ENCODE measurements at regions of chr5 and their contacts with region 1.

Region 1: GRCh38 chr5:149561848-149562247 is 10.6 kb upstream of the CSNK1A1 start:
- DNase-seq: peak; percentile 8
- ATAC-seq: peak; percentile 91
- H3K4me3 Mint-ChIP-seq: no peak overlapping the region
- H3K27ac Mint-ChIP-seq: peak overlapping the region; percentile 74
- H3K4me1 Mint-ChIP-seq: peaks cover 30% of the 10 kb centered on the region
- H3K27me3 Mint-ChIP-seq: no peaks in the 10 kb centered on the region

Region 2: DNA sequence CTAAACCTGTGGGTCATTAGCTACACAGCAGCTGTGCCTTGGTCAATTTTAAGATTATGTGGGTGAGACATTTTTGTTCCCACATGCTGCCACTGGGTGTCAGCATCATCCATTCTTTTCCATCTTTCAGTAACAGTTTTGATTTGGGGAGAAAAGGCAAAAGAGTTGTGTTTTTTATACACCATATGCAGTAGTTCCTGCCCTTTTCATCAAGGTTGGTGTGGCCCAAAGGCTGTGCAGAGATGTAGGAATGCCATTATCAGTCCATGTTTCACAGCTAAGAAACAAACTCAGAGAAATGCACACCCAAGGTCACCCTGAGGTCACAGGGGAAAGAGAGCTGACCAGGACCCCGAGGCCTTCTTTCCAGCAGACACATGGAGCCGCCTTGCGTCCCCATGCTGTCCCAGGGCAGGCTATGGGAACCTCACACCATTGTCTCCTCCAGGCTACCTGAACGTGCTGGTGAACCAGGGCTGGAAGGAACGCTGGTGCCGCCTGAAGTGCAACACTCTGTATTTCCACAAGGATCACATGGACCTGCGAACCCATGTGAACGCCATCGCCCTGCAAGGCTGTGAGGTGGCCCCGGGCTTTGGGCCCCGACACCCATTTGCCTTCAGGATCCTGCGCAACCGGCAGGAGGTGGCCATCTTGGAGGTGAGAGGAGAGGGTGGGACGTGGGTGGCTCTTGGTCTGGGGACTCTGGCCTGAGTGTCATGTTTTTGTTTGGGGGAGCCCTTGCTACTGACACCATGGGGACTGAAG is 244.4 kb before region 1 on chr5:
- CTCF ChIA-PET with region 1: interaction called, 8 read pairs
- POLR2A ChIA-PET with region 1: no interaction called
- intact Hi-C with region 1: loop called in 1 of 2 experiments (anchors 10 kb)
- DNase-seq: peak; percentile 52
- ATAC-seq: peak; percentile 74
- H3K4me3 Mint-ChIP-seq: no peak overlapping the region
- H3K27ac Mint-ChIP-seq: no peak overlapping the region
- H3K4me1 Mint-ChIP-seq: no peaks in the 10 kb centered on the region
- H3K27me3 Mint-ChIP-seq: no peaks in the 10 kb centered on the region

Region 3: GRCh38 chr5:149374286-149374685 is 187.6 kb before region 1 on chr5:
- CTCF ChIA-PET with region 1: interaction called, 10 read pairs
- POLR2A ChIA-PET with region 1: no interaction called
- intact Hi-C with region 1: loop called in 1 of 2 experiments (anchors 5 kb)
- DNase-seq: no peak
- ATAC-seq: no peak
- H3K4me3 Mint-ChIP-seq: no peak overlapping the region
- H3K27ac Mint-ChIP-seq: no peak overlapping the region
- H3K4me1 Mint-ChIP-seq: no peaks in the 10 kb centered on the region
- H3K27me3 Mint-ChIP-seq: no peaks in the 10 kb centered on the region

Region 4: GRCh38 chr5:149434162-149435014 is 127.5 kb before region 1 on chr5:
- CTCF ChIA-PET with region 1: interaction called, 38 read pairs
- POLR2A ChIA-PET with region 1: interaction called, 3 read pairs
- intact Hi-C with region 1: loop called (anchors 2 kb)
- DNase-seq: peak; percentile 75
- ATAC-seq: peak; percentile 66
- H3K4me3 Mint-ChIP-seq: no peak overlapping the region
- H3K27ac Mint-ChIP-seq: no peak overlapping the region
- H3K4me1 Mint-ChIP-seq: peaks cover 14% of the 10 kb centered on the region
- H3K27me3 Mint-ChIP-seq: no peaks in the 10 kb centered on the region

Region 5: DNA sequence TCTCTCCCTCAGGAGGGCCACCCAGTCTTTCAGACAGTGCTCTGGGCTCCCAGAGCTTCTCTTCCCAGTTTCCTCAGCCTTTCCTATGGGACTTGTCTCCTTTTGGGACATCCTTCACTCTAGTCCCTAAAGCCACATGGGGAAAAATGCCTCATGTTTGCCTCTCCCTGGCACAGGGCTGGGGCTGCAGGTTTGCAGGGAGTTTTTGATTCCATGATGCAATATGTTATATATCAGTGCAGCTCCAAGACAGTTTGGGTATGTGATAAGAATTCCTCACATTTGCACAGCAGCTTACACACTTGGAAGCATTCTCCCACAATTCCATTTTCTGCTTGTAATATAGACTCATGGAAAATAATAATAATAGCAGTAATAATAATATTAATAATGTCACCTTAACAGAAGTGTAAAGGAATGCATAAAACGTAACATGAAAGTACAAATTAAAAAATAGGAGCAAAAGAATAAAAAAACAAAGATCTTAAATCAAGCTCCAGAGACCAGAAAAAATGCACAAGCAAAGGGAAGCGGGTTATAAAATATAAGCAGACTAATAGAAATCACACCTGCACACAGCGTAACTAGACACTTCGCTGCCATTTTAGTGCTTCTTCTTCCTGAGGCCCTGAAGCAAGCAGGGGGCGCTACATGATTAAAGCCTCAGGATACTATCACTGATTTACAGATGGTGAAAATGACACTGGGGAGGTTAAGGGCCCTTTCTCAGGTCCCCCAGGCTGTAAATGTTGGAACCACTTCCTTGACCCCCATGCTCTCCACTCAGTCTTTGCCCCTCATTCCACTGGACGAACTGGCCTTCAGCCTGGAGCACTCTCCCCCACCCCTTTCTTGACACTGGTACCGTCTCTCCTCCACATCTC is 112.8 kb before region 1 on chr5:
- CTCF ChIA-PET with region 1: interaction called, 22 read pairs
- POLR2A ChIA-PET with region 1: no interaction called
- intact Hi-C with region 1: loop called in 1 of 2 experiments (anchors 1 kb)
- DNase-seq: peak; percentile 46
- ATAC-seq: no peak
- H3K4me3 Mint-ChIP-seq: no peak overlapping the region
- H3K27ac Mint-ChIP-seq: no peak overlapping the region
- H3K4me1 Mint-ChIP-seq: no peaks in the 10 kb centered on the region
- H3K27me3 Mint-ChIP-seq: no peaks in the 10 kb centered on the region

Region 6: GRCh38 chr5:149474212-149474618 is 87.6 kb before region 1 on chr5:
- CTCF ChIA-PET with region 1: no interaction called
- POLR2A ChIA-PET with region 1: no interaction called
- intact Hi-C with region 1: no loop called
- DNase-seq: no peak
- ATAC-seq: no peak
- H3K4me3 Mint-ChIP-seq: no peak overlapping the region
- H3K27ac Mint-ChIP-seq: no peak overlapping the region
- H3K4me1 Mint-ChIP-seq: no peaks in the 10 kb centered on the region
- H3K27me3 Mint-ChIP-seq: no peaks in the 10 kb centered on the region

Region 7: GRCh38 chr5:149576021-149576420 is 14.2 kb after region 1 on chr5:
- CTCF ChIA-PET with region 1: interaction called, 11 read pairs
- POLR2A ChIA-PET with region 1: no interaction called
- intact Hi-C with region 1: no loop called
- DNase-seq: peak; percentile 39
- ATAC-seq: peak; percentile 92
- H3K4me3 Mint-ChIP-seq: no peak overlapping the region
- H3K27ac Mint-ChIP-seq: peak overlapping the region; percentile 90
- H3K4me1 Mint-ChIP-seq: peaks cover 33% of the 10 kb centered on the region
- H3K27me3 Mint-ChIP-seq: peaks cover 2% of the 10 kb centered on the region

Region 8: DNA sequence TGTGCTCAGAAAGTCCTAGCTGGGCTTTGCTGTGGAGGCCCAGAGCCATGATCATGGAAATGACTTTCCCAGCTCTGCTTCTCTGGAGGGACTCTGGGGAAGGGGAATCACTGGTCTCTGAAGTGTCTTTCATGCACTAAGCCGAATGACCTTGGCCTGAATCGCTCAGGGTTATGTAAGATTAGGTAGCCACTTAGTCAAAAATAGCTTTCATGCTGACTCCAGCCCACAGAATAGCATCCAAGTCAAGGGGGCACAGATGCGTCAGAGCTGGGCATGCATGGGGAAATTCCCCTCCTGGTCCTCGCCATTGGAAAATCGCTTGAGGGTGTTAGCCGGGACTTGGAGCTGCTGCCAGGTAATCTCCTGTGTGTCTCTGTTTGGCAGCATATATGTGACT is 132.2 kb after region 1 on chr5:
- CTCF ChIA-PET with region 1: no interaction called
- POLR2A ChIA-PET with region 1: no interaction called
- intact Hi-C with region 1: no loop called
- DNase-seq: no peak
- ATAC-seq: no peak
- H3K4me3 Mint-ChIP-seq: no peak overlapping the region
- H3K27ac Mint-ChIP-seq: no peak overlapping the region
- H3K4me1 Mint-ChIP-seq: no peaks in the 10 kb centered on the region
- H3K27me3 Mint-ChIP-seq: peaks cover 18% of the 10 kb centered on the region